Dorsolateral prefrontal cortex (tissue), 120 donors: ENCODE measurements at regions of chr9 and their contacts with region 1.

Region 1: DNA sequence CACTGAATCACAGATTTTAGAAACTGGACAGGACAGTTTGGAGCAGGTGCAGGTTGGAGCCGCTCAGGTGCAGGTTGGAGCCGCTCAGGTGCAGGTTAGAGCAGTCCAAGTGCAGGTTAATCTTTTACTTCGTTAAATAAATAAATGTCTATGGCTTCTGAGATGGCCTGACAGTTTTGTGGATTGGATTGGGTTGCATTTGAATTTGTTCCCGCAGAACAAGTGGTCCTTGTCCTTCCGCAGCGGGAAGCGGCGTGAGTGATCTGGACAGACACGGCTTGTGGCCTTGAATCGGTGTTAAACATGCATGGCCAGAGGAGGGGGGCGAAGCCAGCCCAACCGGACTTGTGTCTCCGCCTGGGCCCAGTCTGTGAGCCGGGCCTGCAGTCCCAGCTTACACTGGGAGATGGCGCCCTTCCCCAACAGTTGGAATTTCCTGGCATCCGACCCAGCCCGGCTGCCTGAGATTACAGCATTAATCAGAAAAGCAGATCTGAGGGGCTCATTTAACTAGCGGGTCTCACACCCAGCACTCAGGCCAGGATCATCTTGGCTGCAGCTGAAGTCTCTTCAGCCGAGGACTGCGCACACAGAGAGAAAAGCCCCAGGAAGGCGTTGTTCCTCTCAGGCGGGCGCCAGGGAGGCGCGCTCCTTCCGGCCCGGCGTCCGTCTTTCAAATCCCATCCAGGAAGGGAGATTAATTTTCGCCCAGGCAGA is 1.5 kb upstream of the OLFM1 start:
- DNase-seq: peak; percentile 79 to 91 (median 86)
- H3K4me3 ChIP-seq: peak overlapping the region in 58 of 59 donors; percentile 1 to 76 (median 42)
- H3K27ac ChIP-seq: peak overlapping the region in 47 of 59 donors; percentile 3 to 83 (median 55)
- H3K27me3 ChIP-seq: peaks cover 0 to 30% (median 13%) of the 10 kb centered on the region in 45 donors
- CTCF ChIP-seq: peak; percentile 62 to 99 (median 97)

Region 2: DNA sequence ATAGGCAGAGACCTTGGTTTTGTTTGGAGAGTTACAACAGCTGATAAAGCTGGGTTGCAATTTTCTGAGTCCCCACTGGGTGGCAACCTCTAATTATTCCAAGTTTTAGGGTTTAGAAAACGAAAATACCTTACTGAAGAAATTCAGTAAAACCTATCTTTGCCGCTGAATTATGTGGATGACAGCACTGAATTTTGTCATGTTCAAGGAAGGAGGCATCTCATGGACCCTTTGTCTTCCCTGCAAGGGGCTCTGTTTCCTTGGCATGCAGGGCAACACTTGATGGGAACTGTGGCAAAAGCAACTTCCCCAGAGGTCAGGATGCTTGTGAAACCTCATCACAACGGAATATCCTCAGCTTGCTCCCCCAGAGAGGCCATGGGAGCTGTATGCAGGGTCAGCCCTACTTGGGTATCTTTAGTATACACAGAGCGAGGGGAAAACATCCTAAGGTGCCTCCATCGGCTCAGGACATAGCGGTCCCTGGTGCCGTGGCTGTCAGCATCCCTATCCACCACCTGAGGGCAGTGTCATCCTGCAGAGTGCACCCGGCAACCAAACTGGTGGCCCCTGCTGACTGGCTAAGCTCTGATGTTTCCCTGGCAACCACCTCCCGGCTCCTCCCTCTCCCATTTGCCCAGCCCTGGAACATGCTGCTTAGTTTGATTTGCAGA is 636.6 kb before region 1 on chr9:
- intact Hi-C with region 1: loop called in 1 of 2 experiments (anchors 5 kb)
- DNase-seq: peak; percentile 75 to 96 (median 92)
- H3K4me3 ChIP-seq: no peak overlapping the region
- H3K27ac ChIP-seq: peak overlapping the region in 16 of 59 donors; percentile 3 to 65 (median 29)
- H3K27me3 ChIP-seq: no peaks in the 10 kb centered on the region
- CTCF ChIP-seq: peak; percentile 63 to 98 (median 92)

Region 3: GRCh38 chr9:134698587-134699342 is 387.2 kb before region 1 on chr9:
- intact Hi-C with region 1: loop called in 1 of 2 experiments (anchors 10 kb)
- DNase-seq: peak in 9 of 10 donors; percentile 43 to 81 (median 55)
- H3K4me3 ChIP-seq: no peak overlapping the region
- H3K27ac ChIP-seq: no peak overlapping the region
- H3K27me3 ChIP-seq: no peaks in the 10 kb centered on the region
- CTCF ChIP-seq: peak; percentile 41 to 93 (median 87)

Region 4: GRCh38 chr9:135050072-135050990 is 35.7 kb before region 1 on chr9:
- intact Hi-C with region 1: no loop called
- DNase-seq: peak in 3 of 10 donors; percentile 4 to 34 (median 18)
- H3K4me3 ChIP-seq: no peak overlapping the region
- H3K27ac ChIP-seq: no peak overlapping the region
- H3K27me3 ChIP-seq: peaks cover 0 to 13% (median 0%) of the 10 kb centered on the region in 45 donors
- CTCF ChIP-seq: no peak

Region 5: GRCh38 chr9:135329571-135330306 is 243.8 kb after region 1 on chr9:
- intact Hi-C with region 1: no loop called
- DNase-seq: peak in 3 of 10 donors; percentile 10 to 28 (median 27)
- H3K4me3 ChIP-seq: no peak overlapping the region
- H3K27ac ChIP-seq: no peak overlapping the region
- H3K27me3 ChIP-seq: peaks cover 0 to 3% (median 0%) of the 10 kb centered on the region in 45 donors
- CTCF ChIP-seq: no peak

Region 6: GRCh38 chr9:135343837-135344522 is 258.0 kb after region 1 on chr9:
- intact Hi-C with region 1: loop called (anchors 2 kb)
- DNase-seq: peak in 9 of 10 donors; percentile 44 to 82 (median 68)
- H3K4me3 ChIP-seq: no peak overlapping the region
- H3K27ac ChIP-seq: peak overlapping the region in 32 of 59 donors; percentile 13 to 88 (median 71)
- H3K27me3 ChIP-seq: peaks cover 0 to 51% (median 0%) of the 10 kb centered on the region in 45 donors
- CTCF ChIP-seq: peak; percentile 72 to 98 (median 90)

Region 7: DNA sequence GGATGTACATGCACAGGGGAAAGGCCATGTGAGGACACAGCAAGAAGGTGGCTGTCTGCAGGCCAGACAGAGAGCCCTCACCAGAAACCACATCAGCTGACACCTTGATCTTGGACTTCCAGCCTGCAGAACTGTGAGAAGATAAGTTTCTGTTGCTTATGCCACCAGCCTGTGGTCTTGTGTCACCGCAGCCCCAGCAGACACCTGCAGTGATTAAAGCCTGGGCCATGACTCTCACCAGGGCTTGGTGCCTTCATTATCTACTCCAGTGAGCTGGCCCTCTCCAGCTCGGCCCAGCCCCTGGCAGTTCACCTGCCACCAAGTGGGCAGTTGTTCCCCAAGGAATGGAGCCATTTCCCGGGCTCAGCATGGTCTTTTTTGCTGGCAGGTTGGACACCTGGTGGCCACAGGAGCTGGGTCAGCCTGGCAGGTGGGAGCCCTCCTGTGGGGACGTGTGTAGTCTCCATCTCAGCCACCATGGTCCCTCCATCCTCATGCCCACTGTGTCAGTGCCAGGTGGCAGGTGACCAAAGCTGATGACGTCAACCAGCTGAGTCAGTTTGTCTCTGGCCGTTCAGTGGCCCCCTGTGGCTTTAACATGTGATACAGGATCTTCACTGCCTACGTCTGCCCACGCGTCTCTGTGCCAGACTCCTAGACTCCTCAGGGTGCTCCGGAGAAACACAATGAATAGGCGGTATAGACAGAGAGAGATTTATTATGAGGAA is 293.7 kb after region 1 on chr9:
- intact Hi-C with region 1: no loop called
- DNase-seq: peak in 5 of 10 donors; percentile 25 to 69 (median 37)
- H3K4me3 ChIP-seq: no peak overlapping the region
- H3K27ac ChIP-seq: peak overlapping the region in 13 of 59 donors; percentile 10 to 69 (median 38)
- H3K27me3 ChIP-seq: peaks cover 0 to 4% (median 0%) of the 10 kb centered on the region in 45 donors
- CTCF ChIP-seq: no peak

Region 8: GRCh38 chr9:135410831-135411473 is 325.0 kb after region 1 on chr9:
- intact Hi-C with region 1: loop called (anchors 1 to 2 kb)
- DNase-seq: no peak
- H3K4me3 ChIP-seq: no peak overlapping the region
- H3K27ac ChIP-seq: no peak overlapping the region
- H3K27me3 ChIP-seq: peaks cover 0 to 4% (median 0%) of the 10 kb centered on the region in 45 donors
- CTCF ChIP-seq: no peak

Region 9: DNA sequence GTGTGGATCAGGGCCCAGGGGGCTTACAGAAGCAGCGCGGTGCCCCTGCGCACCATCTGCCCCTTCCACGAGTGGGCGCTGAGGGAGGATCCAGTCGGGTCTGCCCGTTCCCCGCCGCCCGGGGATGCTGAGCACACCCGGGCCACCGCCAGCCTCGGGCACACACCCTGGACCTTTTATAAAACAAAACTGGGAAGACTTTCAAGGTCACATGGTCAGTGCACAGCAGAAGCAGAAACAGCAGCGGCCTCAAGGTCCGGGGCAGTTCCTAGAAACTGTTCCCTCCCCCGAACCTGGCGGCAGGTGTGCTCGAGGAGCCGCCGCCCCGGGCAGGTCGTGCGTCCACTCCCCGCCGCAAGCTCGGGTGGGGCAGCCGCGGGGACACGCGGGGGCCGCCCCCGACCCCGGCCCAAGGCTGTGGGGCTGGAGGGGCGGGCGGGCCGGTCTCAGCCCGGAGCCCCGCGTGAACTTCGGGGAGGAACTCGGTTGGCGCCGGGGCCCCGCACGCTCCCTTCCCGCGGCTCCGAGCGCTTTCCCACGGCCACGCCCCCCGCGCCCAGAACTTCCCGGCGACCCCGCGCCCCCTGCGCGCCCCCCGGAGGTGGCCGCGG is 393.0 kb after region 1 on chr9:
- intact Hi-C with region 1: loop called in 1 of 2 experiments (anchors 5 kb)
- DNase-seq: peak in 3 of 10 donors; percentile 10 to 55 (median 54)
- H3K4me3 ChIP-seq: peak overlapping the region; percentile 37 to 84 (median 66)
- H3K27ac ChIP-seq: peak overlapping the region in 42 of 59 donors; percentile 0 to 85 (median 56)
- H3K27me3 ChIP-seq: no peaks in the 10 kb centered on the region
- CTCF ChIP-seq: peak in 20 of 56 donors; percentile 6 to 38 (median 18)